ENCODE measurements at regions of chrX and their contacts with region 1.

Region 1: GRCh38 chrX:138026211-138026610 is 460.3 kb downstream of the ZIC3 start:
- DNase-seq: peak; percentile 14
- H3K4me3 Mint-ChIP-seq: no peak overlapping the region
- H3K27ac Mint-ChIP-seq: no peak overlapping the region
- H3K4me1 Mint-ChIP-seq: no peaks in the 10 kb centered on the region
- H3K27me3 Mint-ChIP-seq: no peaks in the 10 kb centered on the region
- CTCF ChIP-seq: peak; percentile 49

Region 2: DNA sequence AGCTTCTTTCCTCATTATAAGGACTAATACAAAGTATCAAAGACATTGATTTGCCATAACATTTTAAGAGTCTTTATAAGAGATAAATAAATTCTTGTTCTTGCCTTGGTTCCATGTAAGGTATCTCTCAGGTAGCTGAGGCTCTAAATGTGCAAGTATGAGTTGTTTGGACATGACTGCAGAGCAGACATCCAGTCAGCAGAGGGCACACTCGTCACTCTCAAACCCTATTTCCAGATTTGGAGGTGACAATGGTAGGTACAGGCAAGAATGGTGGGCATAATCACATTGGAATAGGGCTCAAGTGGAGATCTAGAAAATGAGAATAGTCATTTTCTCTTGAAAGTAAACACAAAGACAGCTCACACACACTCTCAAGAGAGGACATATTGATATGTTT is 593.6 kb before region 1 on chrX:
- CTCF ChIA-PET with region 1: interaction called, 7 read pairs
- POLR2A ChIA-PET with region 1: no interaction called
- intact Hi-C with region 1: loop called (anchors 5 kb)
- DNase-seq: peak; percentile 14
- H3K4me3 Mint-ChIP-seq: no peak overlapping the region
- H3K27ac Mint-ChIP-seq: no peak overlapping the region
- H3K4me1 Mint-ChIP-seq: no peaks in the 10 kb centered on the region
- H3K27me3 Mint-ChIP-seq: no peaks in the 10 kb centered on the region
- CTCF ChIP-seq: peak; percentile 30